CD4-positive, alpha-beta memory T cell (primary cell): ENCODE measurements at regions of chr2 and their contacts with region 1.

Region 1: DNA sequence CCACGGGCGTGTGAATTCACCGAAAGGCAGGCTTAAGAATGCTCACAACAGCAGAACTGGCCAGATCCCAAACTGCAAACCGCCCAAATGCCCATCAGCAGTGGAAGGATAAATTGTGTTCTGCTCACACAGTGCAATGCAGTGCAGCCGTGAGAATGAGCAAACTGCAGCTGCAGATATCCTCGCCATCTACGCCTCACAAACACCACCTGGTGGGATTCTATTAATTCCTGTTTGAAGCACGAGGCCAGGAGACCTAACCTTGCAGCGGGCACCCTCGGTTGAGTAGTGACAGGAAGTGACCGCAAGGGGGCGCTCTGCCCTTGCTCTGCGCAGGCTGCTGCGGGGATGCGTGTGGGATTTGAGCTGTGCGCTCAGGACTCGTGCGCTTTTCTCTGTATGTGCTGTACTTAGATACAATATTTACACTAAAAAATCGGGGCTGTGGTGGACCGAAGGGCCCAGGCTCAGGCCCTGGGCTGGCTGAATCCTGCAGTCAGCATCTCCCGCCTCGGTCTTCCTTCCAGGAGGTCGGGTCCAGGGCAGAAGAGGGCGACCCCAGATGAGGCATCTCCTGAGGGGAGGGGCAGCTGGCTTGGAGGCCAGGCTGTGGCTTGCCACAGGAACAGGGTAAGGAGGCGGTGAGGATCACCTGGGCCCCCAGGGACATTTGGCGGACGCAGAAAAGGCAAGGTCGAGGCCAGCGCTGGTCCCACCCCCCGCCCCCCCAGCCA is 19.8 kb upstream of the PDIA6 start:
- DNase-seq: peak; percentile 75 to 79 (median 77)
- H3K4me3 ChIP-seq: no peak overlapping the region
- H3K4me3 Mint-ChIP-seq: peak overlapping the region in 7 of 8 donors; percentile 14 to 54 (median 33)
- H3K27ac ChIP-seq: no peak overlapping the region
- H3K27ac Mint-ChIP-seq: peak overlapping the region in 2 of 7 donors; percentile 23 to 63
- H3K4me1 ChIP-seq: peaks cover 14% of the 10 kb centered on the region
- H3K4me1 Mint-ChIP-seq: peaks cover 4 to 17% (median 9%) of the 10 kb centered on the region in 4 donors
- H3K27me3 ChIP-seq: peaks cover 4% of the 10 kb centered on the region
- H3K27me3 Mint-ChIP-seq: peaks cover 11 to 18% of the 10 kb centered on the region in 2 donors

Region 2: DNA sequence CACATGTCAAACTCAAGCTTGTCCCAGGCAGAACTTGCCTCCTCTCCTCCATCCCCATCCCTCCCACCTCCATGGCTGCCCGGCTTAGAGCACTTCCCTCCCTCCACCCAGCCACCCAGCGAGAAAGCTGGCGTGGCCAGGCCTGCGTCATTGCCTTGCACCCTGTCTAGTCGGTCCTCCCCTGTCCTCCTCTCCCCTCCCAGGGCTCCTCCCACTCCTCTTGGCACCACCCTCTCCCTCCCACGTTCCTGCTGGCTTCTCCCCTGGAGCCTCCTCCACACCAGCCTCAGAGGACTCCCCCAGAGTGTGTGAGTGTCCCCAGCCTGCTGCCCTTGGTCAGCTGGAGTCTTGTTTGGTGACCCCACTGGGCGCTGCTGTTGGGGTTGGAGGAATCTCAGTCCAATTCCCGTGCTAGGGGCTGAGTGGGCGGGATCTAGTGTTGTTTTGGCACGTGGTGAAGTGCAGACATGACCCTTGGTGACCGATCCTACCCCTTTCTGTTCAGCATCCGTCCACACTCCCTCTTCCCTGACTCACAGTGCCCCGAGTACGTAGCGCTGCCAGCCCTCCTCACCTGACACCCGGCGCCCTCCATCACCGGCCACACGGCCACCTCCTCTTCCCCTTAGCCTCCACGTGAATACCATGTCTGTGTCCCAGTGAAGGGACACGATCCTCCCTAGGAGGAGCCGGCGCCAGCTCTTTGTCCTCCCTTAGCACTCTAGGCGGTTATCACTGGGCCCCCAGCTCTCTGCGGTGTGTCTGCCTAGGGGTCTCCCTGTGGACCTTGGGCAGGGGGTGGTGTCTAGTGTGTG is 69.5 kb before region 1 on chr2:
- CTCF ChIA-PET with region 1: no interaction called
- POLR2A ChIA-PET with region 1: no interaction called
- intact Hi-C with region 1: no loop called
- DNase-seq: no peak
- H3K4me3 ChIP-seq: no peak overlapping the region
- H3K4me3 Mint-ChIP-seq: no peak overlapping the region
- H3K27ac ChIP-seq: no peak overlapping the region
- H3K27ac Mint-ChIP-seq: peak overlapping the region in 1 of 7 donors; percentile 53
- H3K4me1 ChIP-seq: no peaks in the 10 kb centered on the region
- H3K4me1 Mint-ChIP-seq: no peaks in the 10 kb centered on the region
- H3K27me3 ChIP-seq: no peaks in the 10 kb centered on the region
- H3K27me3 Mint-ChIP-seq: peaks cover 0 to 1% of the 10 kb centered on the region in 2 donors

Region 3: GRCh38 chr2:10787176-10787968 is 45.0 kb before region 1 on chr2:
- CTCF ChIA-PET with region 1: interaction called, 7 read pairs
- POLR2A ChIA-PET with region 1: no interaction called
- intact Hi-C with region 1: loop called (anchors 2 kb)
- DNase-seq: peak in 3 of 5 donors; percentile 9 to 47 (median 11)
- H3K4me3 ChIP-seq: no peak overlapping the region
- H3K4me3 Mint-ChIP-seq: no peak overlapping the region
- H3K27ac ChIP-seq: no peak overlapping the region
- H3K27ac Mint-ChIP-seq: peak overlapping the region in 2 of 7 donors; percentile 13 to 29
- H3K4me1 ChIP-seq: peaks cover 23% of the 10 kb centered on the region
- H3K4me1 Mint-ChIP-seq: peaks cover 0 to 26% (median 20%) of the 10 kb centered on the region in 4 donors
- H3K27me3 ChIP-seq: no peaks in the 10 kb centered on the region
- H3K27me3 Mint-ChIP-seq: no peaks in the 10 kb centered on the region

Region 4: GRCh38 chr2:10844097-10844496 is 11.7 kb after region 1 on chr2:
- CTCF ChIA-PET with region 1: interaction called, 39 read pairs
- POLR2A ChIA-PET with region 1: no interaction called
- intact Hi-C with region 1: no loop called
- DNase-seq: no peak
- H3K4me3 ChIP-seq: no peak overlapping the region
- H3K4me3 Mint-ChIP-seq: no peak overlapping the region
- H3K27ac ChIP-seq: no peak overlapping the region
- H3K27ac Mint-ChIP-seq: no peak overlapping the region
- H3K4me1 ChIP-seq: no peaks in the 10 kb centered on the region
- H3K4me1 Mint-ChIP-seq: no peaks in the 10 kb centered on the region
- H3K27me3 ChIP-seq: no peaks in the 10 kb centered on the region
- H3K27me3 Mint-ChIP-seq: peaks cover 2 to 20% of the 10 kb centered on the region in 2 donors

Region 5: DNA sequence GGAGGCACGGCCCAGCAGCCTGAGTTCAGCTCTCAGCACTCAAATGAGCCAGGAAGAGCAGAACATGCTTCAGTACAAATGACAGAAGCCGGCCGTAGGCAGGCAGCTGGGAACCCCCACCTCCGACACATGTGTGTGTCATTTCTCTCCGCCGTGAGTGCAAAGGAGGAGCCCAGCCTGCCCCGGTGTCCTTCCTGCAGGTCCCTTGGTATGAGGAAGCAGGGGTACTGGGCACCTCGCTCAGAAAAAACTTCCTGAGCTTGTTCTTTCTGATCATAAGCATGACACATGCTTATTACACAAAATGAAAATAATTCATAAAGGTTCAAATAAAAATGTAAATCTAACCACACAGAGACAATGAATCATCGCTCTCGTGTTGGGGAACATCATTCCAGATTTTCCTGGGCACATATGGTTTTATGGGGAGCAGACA is 114.7 kb after region 1 on chr2:
- CTCF ChIA-PET with region 1: no interaction called
- POLR2A ChIA-PET with region 1: no interaction called
- intact Hi-C with region 1: no loop called
- DNase-seq: no peak
- H3K4me3 ChIP-seq: no peak overlapping the region
- H3K4me3 Mint-ChIP-seq: no peak overlapping the region
- H3K27ac ChIP-seq: no peak overlapping the region
- H3K27ac Mint-ChIP-seq: no peak overlapping the region
- H3K4me1 ChIP-seq: peaks cover 1% of the 10 kb centered on the region
- H3K4me1 Mint-ChIP-seq: peaks cover 0 to 8% (median under 1%) of the 10 kb centered on the region in 4 donors
- H3K27me3 ChIP-seq: peaks cover 7% of the 10 kb centered on the region
- H3K27me3 Mint-ChIP-seq: peaks cover 28 to 36% of the 10 kb centered on the region in 2 donors

Region 6: DNA sequence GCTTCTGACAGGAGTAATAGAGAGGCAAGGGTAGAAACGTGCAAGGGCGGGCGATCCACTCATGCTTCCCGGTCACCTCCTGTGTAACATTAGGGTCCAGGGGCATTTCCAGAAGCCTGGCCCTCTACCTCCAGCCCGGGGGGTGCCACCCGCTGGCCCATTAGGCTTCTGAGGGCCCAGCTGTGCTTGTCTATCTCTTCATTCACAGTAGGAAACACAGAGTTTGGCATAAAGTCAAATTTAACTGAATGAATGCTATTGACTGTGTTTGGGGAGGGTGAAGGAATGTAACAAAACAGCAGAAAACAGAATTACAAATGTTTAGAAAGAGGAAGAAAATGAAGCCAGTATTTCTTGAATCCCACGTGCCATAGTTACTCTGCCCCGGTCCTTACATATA is 210.5 kb after region 1 on chr2:
- CTCF ChIA-PET with region 1: no interaction called
- POLR2A ChIA-PET with region 1: no interaction called
- intact Hi-C with region 1: no loop called
- DNase-seq: no peak
- H3K4me3 ChIP-seq: no peak overlapping the region
- H3K4me3 Mint-ChIP-seq: no peak overlapping the region
- H3K27ac ChIP-seq: no peak overlapping the region
- H3K27ac Mint-ChIP-seq: no peak overlapping the region
- H3K4me1 ChIP-seq: no peaks in the 10 kb centered on the region
- H3K4me1 Mint-ChIP-seq: no peaks in the 10 kb centered on the region
- H3K27me3 ChIP-seq: no peaks in the 10 kb centered on the region
- H3K27me3 Mint-ChIP-seq: peaks cover 9 to 23% of the 10 kb centered on the region in 2 donors

Region 7: DNA sequence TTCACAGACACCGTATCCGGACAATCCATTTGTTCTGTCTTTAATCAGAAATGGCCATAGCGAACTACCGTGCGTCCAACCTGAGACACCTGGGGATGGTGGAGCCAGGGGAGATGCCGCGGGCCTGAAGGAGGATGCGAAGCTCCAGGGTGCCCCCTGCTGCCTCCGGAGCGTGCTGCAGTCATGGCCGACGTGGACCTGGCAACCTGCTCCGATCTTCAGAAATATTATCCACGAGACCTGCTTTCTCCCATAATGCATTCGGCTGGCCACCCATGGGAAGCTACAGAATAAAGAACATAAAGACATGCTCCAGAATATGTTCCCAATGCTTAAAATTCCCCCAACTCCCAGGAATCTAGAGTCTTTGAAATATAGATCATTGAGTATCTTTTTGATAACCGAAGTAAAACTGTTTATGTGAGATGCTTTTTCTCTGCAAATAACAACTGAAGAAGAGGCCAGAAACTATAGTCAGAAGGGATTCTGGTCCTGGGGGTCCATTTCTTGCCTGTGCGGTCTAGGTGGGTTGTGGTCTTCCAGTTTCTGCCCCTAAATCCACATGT is 292.2 kb after region 1 on chr2:
- CTCF ChIA-PET with region 1: interaction called, 228 read pairs
- POLR2A ChIA-PET with region 1: interaction called, 16 read pairs
- intact Hi-C with region 1: no loop called
- DNase-seq: peak; percentile 53 to 67 (median 58)
- H3K4me3 ChIP-seq: no peak overlapping the region
- H3K4me3 Mint-ChIP-seq: no peak overlapping the region
- H3K27ac ChIP-seq: no peak overlapping the region
- H3K27ac Mint-ChIP-seq: peak overlapping the region in 3 of 7 donors; percentile 27 to 68 (median 51)
- H3K4me1 ChIP-seq: peaks cover 21% of the 10 kb centered on the region
- H3K4me1 Mint-ChIP-seq: peaks cover 8 to 26% (median 22%) of the 10 kb centered on the region in 4 donors
- H3K27me3 ChIP-seq: no peaks in the 10 kb centered on the region
- H3K27me3 Mint-ChIP-seq: no peaks in the 10 kb centered on the region

Region 8: DNA sequence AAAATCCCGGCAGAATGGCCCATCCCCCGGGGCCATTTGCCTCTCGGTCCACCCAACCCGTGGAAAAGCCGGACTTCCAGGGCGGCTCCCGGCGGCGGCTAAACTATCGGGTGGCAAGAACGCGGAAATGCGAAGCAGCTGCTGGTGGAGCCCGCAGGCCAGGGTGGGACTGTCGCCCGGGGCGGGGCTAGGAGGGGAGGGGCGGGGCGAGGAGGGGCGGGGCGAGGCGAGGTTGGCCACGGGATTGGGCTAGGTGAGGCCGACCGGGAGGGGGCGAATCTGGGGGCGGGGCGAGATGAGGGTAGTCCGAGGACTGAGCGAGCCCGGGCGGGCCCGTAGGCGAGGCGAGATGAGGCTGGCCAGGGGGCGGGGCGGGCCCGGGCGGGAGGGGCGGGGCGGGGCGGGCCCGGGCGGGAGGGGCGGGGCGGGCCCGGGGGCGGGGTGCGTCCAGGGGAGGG is 322.6 kb after region 1 on chr2:
- CTCF ChIA-PET with region 1: no interaction called
- POLR2A ChIA-PET with region 1: no interaction called
- intact Hi-C with region 1: loop called (anchors 1 kb)
- DNase-seq: peak; percentile 95 to 98 (median 97)
- H3K4me3 ChIP-seq: peak overlapping the region; percentile 38 to 66
- H3K4me3 Mint-ChIP-seq: peak overlapping the region; percentile 81 to 88 (median 85)
- H3K27ac ChIP-seq: peak overlapping the region; percentile 68
- H3K27ac Mint-ChIP-seq: peak overlapping the region; percentile 85 to 93 (median 88)
- H3K4me1 ChIP-seq: peaks cover 23% of the 10 kb centered on the region
- H3K4me1 Mint-ChIP-seq: peaks cover 4 to 28% (median 21%) of the 10 kb centered on the region in 4 donors
- H3K27me3 ChIP-seq: no peaks in the 10 kb centered on the region
- H3K27me3 Mint-ChIP-seq: no peaks in the 10 kb centered on the region

Region 9: GRCh38 chr2:11583840-11584524 is 751.6 kb after region 1 on chr2:
- CTCF ChIA-PET with region 1: interaction called, 14 read pairs
- POLR2A ChIA-PET with region 1: no interaction called
- intact Hi-C with region 1: no loop called
- DNase-seq: peak; percentile 23 to 66 (median 34)
- H3K4me3 ChIP-seq: no peak overlapping the region
- H3K4me3 Mint-ChIP-seq: peak overlapping the region in 1 of 8 donors; percentile 28
- H3K27ac ChIP-seq: no peak overlapping the region
- H3K27ac Mint-ChIP-seq: no peak overlapping the region
- H3K4me1 ChIP-seq: no peaks in the 10 kb centered on the region
- H3K4me1 Mint-ChIP-seq: peaks cover 0 to 3% (median 0%) of the 10 kb centered on the region in 4 donors
- H3K27me3 ChIP-seq: no peaks in the 10 kb centered on the region
- H3K27me3 Mint-ChIP-seq: peaks cover 8 to 14% of the 10 kb centered on the region in 2 donors

Region 10: DNA sequence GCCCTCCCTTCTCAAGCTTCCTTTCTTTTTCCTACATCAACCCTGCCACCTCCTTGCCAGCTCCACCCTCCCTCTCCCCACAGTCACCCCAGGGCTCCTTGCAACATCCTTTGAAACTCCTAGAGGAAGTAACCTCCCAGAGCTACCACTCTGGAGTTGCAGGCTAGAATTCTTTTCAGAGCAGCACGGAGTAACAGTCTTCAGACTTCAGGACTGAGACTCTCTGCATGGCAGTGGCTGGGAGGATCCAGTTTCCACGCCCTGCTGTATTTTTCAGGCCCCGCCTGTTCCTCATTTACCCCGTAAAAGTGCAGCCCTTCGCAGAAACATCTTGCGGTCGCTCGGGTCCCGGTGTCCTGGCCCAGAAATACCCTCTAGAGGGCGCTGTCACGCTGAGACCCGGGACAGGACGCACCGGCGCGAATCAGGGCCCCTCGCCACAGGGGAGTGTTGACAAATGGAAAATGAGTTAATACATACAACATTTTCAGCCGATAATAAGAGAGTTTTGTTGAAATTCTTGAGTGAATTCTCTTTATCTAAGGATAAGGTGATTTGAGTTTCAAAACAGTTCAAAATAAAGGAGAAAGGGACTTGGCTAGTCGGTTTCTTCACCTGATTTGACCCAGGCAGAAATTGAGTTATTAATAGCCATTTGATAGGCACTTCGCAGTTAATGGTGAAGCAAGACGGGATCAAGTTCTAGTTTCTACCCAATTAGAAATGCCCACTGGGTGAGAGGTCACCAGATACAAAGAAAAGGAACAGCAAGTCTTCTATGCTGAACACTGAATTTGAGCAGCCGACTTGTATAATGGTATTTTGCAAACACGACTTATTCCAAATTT is 856.1 kb after region 1 on chr2:
- CTCF ChIA-PET with region 1: no interaction called
- POLR2A ChIA-PET with region 1: no interaction called
- intact Hi-C with region 1: no loop called
- DNase-seq: peak; percentile 69 to 75 (median 74)
- H3K4me3 ChIP-seq: no peak overlapping the region
- H3K4me3 Mint-ChIP-seq: peak overlapping the region in 7 of 8 donors; percentile 14 to 69 (median 51)
- H3K27ac ChIP-seq: no peak overlapping the region
- H3K27ac Mint-ChIP-seq: peak overlapping the region in 4 of 7 donors; percentile 13 to 74 (median 18)
- H3K4me1 ChIP-seq: peaks cover 11% of the 10 kb centered on the region
- H3K4me1 Mint-ChIP-seq: peaks cover 5 to 10% (median 9%) of the 10 kb centered on the region in 4 donors
- H3K27me3 ChIP-seq: no peaks in the 10 kb centered on the region
- H3K27me3 Mint-ChIP-seq: peaks cover 3 to 8% of the 10 kb centered on the region in 2 donors